Cardiac septum (tissue), 1 donor: ENCODE measurements at regions of chr11 and their contacts with region 1.

Region 1: DNA sequence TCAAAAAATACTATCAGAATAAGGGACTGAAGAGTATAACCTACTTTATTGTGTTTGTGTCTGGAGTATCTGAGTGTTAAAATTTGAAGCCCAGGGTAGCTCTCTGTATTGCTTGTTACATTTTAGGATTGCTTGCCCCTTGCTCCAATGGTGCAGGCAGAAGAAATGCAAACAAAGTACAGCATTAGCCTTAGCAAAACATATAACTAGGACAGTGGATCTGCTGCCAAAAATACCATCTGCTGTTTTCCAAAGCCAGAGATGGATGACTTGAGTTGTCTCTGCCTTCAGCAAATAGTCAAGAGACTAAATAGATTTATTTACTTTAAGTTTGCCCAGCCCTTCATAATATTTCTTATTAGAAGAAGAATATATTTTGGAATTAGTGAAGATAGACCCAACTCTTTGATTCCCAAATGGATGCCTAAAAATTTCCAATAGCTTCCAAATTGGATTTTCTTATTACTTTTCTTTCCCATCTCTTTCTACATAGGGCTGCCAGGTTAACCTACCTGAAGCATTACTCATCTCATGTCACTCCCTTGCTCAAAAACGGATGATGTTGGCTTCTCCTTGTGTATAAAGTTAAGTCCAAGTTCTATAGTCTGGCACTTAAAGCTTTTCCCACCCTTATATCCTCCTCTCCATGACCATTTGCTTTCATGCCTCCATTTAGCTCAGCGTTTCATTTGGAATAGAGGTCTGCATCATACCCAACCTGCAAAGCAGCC is 66.3 kb downstream of the LDLRAD3 start:
- DNase-seq: no peak

Region 2: GRCh38 chr11:35969089-35970042 is 40.8 kb before region 1 on chr11:
- intact Hi-C with region 1: loop called (anchors 5 kb)
- DNase-seq: no peak

Region 3: GRCh38 chr11:36073411-36074203 is 63.4 kb after region 1 on chr11:
- intact Hi-C with region 1: loop called (anchors 2 kb)
- DNase-seq: no peak